BJ (cell line): ENCODE measurements at regions of chr2 and their contacts with region 1.

Region 1: DNA sequence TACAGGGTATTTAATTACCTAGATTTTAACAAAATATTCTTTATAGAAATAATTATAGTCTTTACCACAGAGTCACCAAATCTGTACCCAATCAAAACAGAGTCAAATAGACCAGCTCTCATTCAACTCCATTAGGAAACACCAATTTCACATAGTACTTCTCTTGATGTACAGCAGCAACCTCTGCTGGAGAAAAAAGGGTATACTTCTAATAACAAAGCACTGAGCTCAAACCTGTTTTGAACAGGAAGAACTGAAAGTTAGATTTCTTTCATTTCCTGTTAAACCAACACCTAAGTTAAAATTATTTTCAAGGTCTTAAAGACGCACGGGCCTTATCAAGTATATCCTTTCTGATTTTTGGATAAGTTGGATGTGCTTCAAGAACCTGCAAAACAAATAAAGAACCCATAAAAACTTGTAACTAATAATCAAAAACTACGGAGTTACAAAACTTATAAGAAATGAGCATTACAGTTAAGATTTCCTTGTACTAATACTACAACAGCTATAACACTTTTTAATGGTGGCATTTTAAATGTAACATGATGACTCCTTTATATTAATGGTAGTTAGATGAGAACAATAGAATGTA is 79.0 kb downstream of the TTC21B start:
- DNase-seq: no peak
- H3K4me3 ChIP-seq: no peak overlapping the region
- H3K27me3 ChIP-seq: no peaks in the 10 kb centered on the region
- CTCF ChIP-seq: peak; percentile 70

Region 2: DNA sequence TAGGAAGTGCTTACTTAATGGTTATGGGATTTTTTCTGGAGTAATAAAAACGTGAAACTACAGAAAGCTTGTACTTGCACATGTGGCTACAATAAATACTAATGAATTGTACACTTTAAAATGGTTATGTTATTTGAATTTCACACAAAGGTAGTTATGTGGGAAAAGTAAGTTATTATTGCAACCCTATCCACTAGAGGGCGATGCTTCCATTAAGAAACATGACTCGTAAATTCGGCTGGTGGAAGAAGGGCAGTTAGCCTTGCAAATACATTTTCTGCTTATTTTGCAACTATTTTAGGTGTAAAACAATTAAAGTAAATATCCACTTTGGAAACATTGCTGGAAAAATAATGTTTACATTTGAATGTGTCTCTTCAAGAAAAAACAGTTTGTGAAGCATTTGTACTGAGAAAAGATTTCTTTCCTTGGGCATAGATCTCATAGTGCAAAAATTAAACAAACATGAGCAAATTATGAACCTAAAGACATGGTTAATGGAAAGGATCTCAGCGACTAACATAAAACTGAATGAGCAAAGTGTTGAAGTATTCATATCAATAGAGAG is 473.2 kb before region 1 on chr2:
- CTCF ChIA-PET with region 1: interaction called, 16 read pairs
- POLR2A ChIA-PET with region 1: no interaction called
- DNase-seq: peak; percentile 22
- H3K4me3 ChIP-seq: no peak overlapping the region
- H3K27me3 ChIP-seq: no peaks in the 10 kb centered on the region
- CTCF ChIP-seq: peak; percentile 66

Region 3: GRCh38 chr2:166246901-166247300 is 372.4 kb after region 1 on chr2:
- CTCF ChIA-PET with region 1: no interaction called
- POLR2A ChIA-PET with region 1: no interaction called
- DNase-seq: no peak
- H3K4me3 ChIP-seq: no peak overlapping the region
- H3K27me3 ChIP-seq: no peaks in the 10 kb centered on the region
- CTCF ChIP-seq: no peak